ENCODE measurements at regions of chr17 and their contacts with region 1.

Region 1: GRCh38 chr17:700504-701094 is 14.0 kb downstream of the VPS53 start:
- DNase-seq: no peak
- ATAC-seq: no peak
- H3K4me3 ChIP-seq: no peak overlapping the region
- H3K27ac ChIP-seq: no peak overlapping the region
- H3K4me1 ChIP-seq: no peaks in the 10 kb centered on the region
- H3K27me3 ChIP-seq: no peaks in the 10 kb centered on the region

Region 2: DNA sequence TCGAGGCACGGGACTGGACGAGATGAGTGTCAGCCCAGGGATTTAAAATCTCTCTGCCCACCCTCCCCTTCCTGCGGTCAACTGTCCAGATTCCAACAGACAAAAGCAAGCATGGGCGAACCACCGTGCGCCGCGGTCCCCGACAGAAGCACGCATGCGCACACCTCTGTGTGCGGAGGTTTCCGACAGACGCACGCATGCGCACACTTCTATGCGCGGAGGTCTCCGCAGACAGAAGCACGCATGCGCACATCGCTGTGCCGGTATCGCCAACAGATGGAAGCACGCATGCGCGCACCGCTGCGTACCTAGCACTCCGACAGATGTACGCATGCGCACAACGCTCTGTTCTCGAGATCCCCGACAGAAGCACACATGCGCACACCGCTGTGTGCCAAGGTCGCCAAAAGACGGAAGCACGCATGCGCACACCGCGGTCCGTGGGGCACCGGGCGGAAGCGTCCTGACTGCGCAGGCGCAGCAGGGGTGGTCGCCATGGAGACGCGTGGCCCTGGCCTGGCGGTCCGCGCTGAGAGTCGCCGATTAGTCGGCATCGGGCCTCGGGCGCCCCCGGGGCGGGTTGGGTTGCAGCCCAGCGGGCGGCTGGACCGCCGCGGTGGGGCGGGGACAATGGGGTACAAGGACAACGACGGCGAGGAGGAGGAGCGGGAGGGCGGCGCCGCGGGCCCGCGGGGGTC is 290.6 kb before region 1 on chr17:
- intact Hi-C with region 1: loop called (anchors 2 kb)
- DNase-seq: peak; percentile 100
- ATAC-seq: peak; percentile 97
- H3K4me3 ChIP-seq: peak overlapping the region; percentile 48 to 50
- H3K27ac ChIP-seq: no peak overlapping the region
- H3K4me1 ChIP-seq: no peaks in the 10 kb centered on the region
- H3K27me3 ChIP-seq: no peaks in the 10 kb centered on the region

Region 3: DNA sequence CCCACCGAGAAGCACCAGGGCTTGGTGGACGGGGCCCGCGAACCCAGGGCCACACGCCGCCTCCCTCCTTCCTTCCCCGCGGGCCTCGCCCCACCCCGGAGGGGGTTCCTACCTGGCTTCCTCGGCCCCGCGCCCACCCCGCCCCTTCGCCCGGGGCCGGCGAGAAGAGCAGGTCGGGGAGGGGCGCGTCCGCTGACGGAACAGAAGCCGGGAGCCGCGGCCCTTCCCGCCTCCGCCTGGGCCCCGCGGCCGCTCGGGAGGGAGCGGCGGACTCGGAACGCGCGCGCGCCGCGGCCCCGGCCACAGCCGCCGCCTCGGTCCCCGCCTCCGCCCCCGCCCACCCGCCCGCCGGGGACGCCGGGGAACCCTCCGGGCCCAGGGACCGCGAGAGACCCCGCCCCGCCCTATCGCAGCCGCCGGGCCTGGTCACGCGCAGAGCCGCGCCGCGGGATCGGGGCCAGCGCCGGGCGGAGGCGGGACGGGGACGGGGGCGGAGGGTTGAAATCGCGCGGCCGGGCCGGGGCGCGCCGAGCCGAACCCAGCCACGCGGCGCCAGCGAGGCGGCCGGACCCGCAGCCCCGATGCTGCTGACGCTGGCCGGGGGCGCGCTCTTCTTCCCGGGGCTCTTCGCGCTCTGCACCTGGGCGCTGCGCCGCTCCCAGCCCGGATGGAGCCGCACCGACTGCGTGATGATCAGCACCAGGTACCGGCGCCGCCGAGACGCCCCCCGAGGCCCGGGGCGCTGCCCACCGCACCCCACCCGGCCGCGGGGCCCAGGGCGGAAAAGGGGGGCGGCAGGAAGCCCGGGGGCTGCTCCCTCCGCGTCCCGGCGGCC is 31.7 kb after region 1 on chr17 and contains the start of gene TLCD3A:
- intact Hi-C with region 1: no loop called
- DNase-seq: peak; percentile 78 to 91
- ATAC-seq: peak; percentile 84
- H3K4me3 ChIP-seq: peak within 1 kb of the TSS; percentile 61 to 84
- H3K27ac ChIP-seq: no peak within 1 kb of the TSS
- H3K4me1 ChIP-seq: no peaks in the 10 kb centered on the region
- H3K27me3 ChIP-seq: no peaks in the 10 kb centered on the region
- total RNA-seq, gene TLCD3A: 8.0 to 11.1 TPM